OCI-LY7 (cell line): ENCODE measurements at regions of chr2 and their contacts with region 1.

Region 1: DNA sequence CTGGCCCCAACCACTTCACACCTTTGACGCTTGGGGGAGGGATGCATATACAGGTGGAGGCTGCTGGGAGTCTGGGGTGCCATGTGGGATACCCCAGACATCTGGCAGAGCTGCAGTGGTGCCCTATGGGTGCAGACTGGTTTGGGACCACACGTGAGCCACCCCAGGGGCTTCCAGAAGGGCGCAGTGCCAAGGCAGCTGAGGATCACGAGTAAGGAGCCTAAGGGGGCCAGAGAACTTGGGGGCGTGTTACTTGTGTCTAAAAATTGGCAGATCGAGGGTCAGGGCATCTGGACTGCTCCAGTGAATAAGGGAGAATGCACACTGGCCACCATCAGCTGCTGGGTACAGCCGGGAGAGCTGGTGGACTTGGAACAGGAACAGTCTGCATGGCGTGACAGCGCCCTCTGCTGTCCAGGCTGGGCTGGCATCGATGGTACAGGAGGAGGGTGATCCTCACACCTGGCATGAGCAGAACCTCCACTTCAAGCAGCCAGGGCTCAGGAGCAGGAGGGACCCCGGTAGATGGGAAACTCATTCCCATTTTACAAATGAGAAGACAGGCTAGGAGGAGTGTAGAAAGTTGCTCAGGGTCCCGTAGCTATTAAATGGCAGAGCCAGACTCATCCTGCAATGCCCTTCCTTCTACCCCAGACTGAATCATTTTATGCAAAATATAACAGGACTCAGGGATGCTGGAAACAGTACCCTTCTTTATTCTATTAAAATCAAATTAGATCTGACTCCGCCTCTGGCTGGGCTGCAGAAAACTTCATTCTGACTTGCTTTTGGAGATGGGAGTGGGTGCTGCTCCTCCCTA is 60.4 kb downstream of the ATOH8 start:
- DNase-seq: peak; percentile 74
- H3K4me3 ChIP-seq: no peak overlapping the region
- H3K27ac ChIP-seq: no peak overlapping the region
- H3K4me1 ChIP-seq: no peaks in the 10 kb centered on the region
- CTCF ChIP-seq: peak; percentile 93

Region 2: DNA sequence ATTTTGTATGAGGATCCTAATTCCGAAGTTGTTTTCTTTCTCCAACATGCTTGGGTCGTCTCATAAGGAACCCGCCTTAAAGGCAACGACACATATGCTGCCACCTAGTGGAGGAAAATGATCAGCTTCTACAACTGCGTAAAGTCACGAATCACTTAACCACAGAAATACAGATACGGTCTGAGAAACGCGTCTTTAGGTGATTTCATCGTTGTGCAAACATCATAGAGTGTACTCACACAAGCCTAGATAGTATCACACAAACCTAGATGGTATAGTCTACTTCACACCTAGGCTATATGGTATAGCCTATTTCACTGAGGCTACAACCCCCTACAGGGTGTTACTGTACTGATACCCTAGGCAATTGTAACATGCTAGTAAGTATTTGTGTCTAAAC is 106.9 kb before region 1 on chr2:
- CTCF ChIA-PET with region 1: no interaction called
- POLR2A ChIA-PET with region 1: no interaction called
- intact Hi-C with region 1: no loop called
- DNase-seq: peak; percentile 84
- H3K4me3 ChIP-seq: no peak overlapping the region
- H3K27ac ChIP-seq: no peak overlapping the region
- H3K4me1 ChIP-seq: peaks cover 11% of the 10 kb centered on the region
- CTCF ChIP-seq: peak; percentile 94

Region 3: GRCh38 chr2:85728883-85729824 is 85.0 kb before region 1 on chr2:
- CTCF ChIA-PET with region 1: no interaction called
- POLR2A ChIA-PET with region 1: interaction called, 4 read pairs
- intact Hi-C with region 1: loop called (anchors 1 kb)
- DNase-seq: peak; percentile 73
- H3K4me3 ChIP-seq: no peak overlapping the region
- H3K27ac ChIP-seq: no peak overlapping the region
- H3K4me1 ChIP-seq: no peaks in the 10 kb centered on the region
- CTCF ChIP-seq: peak; percentile 92

Region 4: DNA sequence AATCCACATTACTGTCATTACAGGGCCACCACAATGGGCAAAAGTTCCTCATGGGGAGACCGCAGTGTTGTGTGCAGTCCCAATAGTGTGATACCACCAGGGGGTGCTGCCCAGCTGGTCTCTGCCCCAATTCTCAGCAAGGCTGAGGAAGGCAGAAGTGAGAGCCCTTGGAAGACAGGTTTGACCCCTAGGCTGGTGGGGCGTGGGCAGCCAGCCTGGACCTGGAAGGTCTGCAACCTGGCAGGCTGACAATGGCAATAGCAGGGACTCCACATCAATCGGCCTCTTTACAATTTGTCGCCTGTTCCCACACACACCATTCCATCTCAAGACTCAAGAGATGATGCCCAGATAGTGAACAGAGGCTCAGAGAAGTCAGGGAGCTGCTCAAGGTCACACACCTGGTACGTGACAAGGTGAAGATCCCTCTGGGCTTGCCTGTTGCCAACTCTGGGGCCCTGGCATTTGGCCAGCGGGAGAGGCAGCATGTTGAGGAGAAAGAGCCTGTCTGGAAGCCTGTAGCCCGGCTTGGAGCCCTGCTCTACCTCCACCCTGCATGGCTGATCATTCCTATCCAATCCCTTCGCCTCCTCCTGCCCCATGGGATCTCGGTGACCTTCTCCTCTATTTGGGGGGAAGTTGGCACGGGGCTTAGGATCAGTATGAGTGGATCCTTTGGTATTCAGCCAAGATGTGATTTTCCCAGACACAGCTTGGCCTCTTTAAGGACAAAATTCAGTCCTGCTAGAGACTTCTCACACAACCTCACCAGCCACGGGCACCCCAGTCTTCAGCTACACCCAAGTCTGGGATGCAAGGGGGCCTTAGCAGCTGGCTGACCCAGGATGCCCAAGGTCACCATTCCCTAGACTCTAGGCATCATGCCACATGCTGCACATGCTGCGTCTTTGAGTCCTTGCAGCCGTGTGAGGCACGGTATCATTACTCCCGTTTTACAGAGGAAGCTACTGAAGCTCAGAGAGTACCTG is 63.3 kb before region 1 on chr2:
- CTCF ChIA-PET with region 1: interaction called, 4 read pairs
- POLR2A ChIA-PET with region 1: no interaction called
- intact Hi-C with region 1: loop called (anchors 1 kb)
- DNase-seq: peak; percentile 58
- H3K4me3 ChIP-seq: no peak overlapping the region
- H3K27ac ChIP-seq: no peak overlapping the region
- H3K4me1 ChIP-seq: peaks cover 9% of the 10 kb centered on the region
- CTCF ChIP-seq: peak; percentile 87